RWPE1 (cell line): ENCODE measurements at regions of chr1 and their contacts with region 1.

Region 1: GRCh38 chr1:14340002-14340800 is 258.3 kb upstream of the KAZN start:
- DNase-seq: no peak
- H3K27ac ChIP-seq: peak overlapping the region; percentile 32; the same call in 1 of the 2 replicates
- CTCF ChIP-seq: no peak

Region 2: GRCh38 chr1:14415395-14415794 is 75.2 kb after region 1 on chr1:
- CTCF ChIA-PET with region 1: no interaction called
- POLR2A ChIA-PET with region 1: interaction called, 14 read pairs
- DNase-seq: no peak
- H3K27ac ChIP-seq: no peak overlapping the region
- CTCF ChIP-seq: no peak; the same call in 1 of the 2 replicates